ENCODE measurements at regions of chr12 and their contacts with region 1.

Region 1: GRCh38 chr12:6540181-6540877 is 6.0 kb downstream of the GAPDH start:
- DNase-seq: peak; percentile 69
- ATAC-seq: peak; percentile 38
- H3K4me3 Mint-ChIP-seq: peak overlapping the region; percentile 48
- H3K27ac Mint-ChIP-seq: peak overlapping the region; percentile 82
- H3K4me1 Mint-ChIP-seq: peaks cover 65% of the 10 kb centered on the region
- H3K27me3 Mint-ChIP-seq: no peaks in the 10 kb centered on the region

Region 2: GRCh38 chr12:6229224-6230218 is 310.8 kb before region 1 on chr12:
- CTCF ChIA-PET with region 1: no interaction called
- POLR2A ChIA-PET with region 1: no interaction called
- DNase-seq: no peak
- ATAC-seq: no peak
- H3K4me3 Mint-ChIP-seq: no peak overlapping the region
- H3K27ac Mint-ChIP-seq: peak overlapping the region; percentile 92
- H3K4me1 Mint-ChIP-seq: peaks cover 38% of the 10 kb centered on the region
- H3K27me3 Mint-ChIP-seq: no peaks in the 10 kb centered on the region

Region 3: GRCh38 chr12:6443361-6443983 is 96.9 kb before region 1 on chr12:
- CTCF ChIA-PET with region 1: interaction called, 15 read pairs
- POLR2A ChIA-PET with region 1: interaction called, 4 read pairs
- DNase-seq: peak; percentile 49
- ATAC-seq: peak; percentile 29
- H3K4me3 Mint-ChIP-seq: peak overlapping the region; percentile 90
- H3K27ac Mint-ChIP-seq: peak overlapping the region; percentile 96
- H3K4me1 Mint-ChIP-seq: peaks cover 68% of the 10 kb centered on the region
- H3K27me3 Mint-ChIP-seq: no peaks in the 10 kb centered on the region

Region 4: GRCh38 chr12:6493497-6494257 is 46.7 kb before region 1 on chr12 and contains the start of gene NCAPD2:
- CTCF ChIA-PET with region 1: interaction called, 20 read pairs
- POLR2A ChIA-PET with region 1: interaction called, 31 read pairs
- DNase-seq: peak; percentile 98
- ATAC-seq: peak; percentile 89
- H3K4me3 Mint-ChIP-seq: peak within 1 kb of the TSS; percentile 93
- H3K27ac Mint-ChIP-seq: peak within 1 kb of the TSS; percentile 99
- H3K4me1 Mint-ChIP-seq: peaks cover 33% of the 10 kb centered on the region
- H3K27me3 Mint-ChIP-seq: no peaks in the 10 kb centered on the region
- total RNA-seq, gene NCAPD2: 195 to 201 TPM

Region 5: DNA sequence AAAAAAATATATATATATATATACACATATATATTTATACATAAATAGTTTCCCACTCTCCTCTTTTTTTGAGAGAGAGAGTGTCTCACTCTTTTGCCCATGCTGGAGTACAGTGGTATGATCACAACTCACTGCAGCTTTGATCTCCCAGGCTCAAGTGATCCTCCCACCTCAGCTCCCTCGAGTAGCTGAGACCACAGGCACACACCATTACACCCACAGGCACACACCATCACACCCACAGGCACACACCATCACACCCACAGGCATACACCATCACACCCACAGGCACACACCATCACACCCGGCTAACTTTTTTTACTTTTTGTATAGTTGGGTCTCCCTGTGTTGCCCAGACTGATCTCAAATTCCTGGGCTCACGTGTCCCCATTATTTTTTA is 20.1 kb before region 1 on chr12:
- CTCF ChIA-PET with region 1: interaction called, 12 read pairs
- POLR2A ChIA-PET with region 1: interaction called, 4 read pairs
- DNase-seq: no peak
- ATAC-seq: no peak
- H3K4me3 Mint-ChIP-seq: no peak overlapping the region
- H3K27ac Mint-ChIP-seq: peak overlapping the region; percentile 73
- H3K4me1 Mint-ChIP-seq: peaks cover 3% of the 10 kb centered on the region
- H3K27me3 Mint-ChIP-seq: no peaks in the 10 kb centered on the region

Region 6: GRCh38 chr12:6563448-6564050 is 23.2 kb after region 1 on chr12:
- CTCF ChIA-PET with region 1: interaction called, 32 read pairs
- POLR2A ChIA-PET with region 1: interaction called, 3 read pairs
- DNase-seq: peak; percentile 79
- ATAC-seq: no peak
- H3K4me3 Mint-ChIP-seq: no peak overlapping the region
- H3K27ac Mint-ChIP-seq: peak overlapping the region; percentile 62
- H3K4me1 Mint-ChIP-seq: peaks cover 33% of the 10 kb centered on the region
- H3K27me3 Mint-ChIP-seq: no peaks in the 10 kb centered on the region

Region 7: DNA sequence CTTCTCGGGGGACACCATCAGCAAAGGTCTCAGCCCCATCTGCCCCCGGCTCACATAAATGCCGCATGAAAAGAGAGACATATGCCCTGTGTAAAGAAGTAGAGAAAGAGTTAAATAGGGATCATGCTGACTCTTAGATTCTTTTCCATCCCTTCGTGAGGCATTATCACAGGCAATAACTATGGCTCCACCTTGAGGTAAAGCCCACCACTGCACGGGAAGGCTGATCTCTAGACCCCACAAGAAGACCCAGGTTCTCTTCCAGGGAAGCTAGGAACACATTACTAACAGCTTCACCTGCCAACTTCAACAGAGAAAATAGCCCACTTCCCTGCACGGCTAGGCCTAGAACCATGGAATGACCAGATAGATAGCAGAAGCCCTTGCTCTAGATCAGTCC is 41.9 kb after region 1 on chr12:
- CTCF ChIA-PET with region 1: no interaction called
- POLR2A ChIA-PET with region 1: no interaction called
- DNase-seq: no peak
- ATAC-seq: no peak
- H3K4me3 Mint-ChIP-seq: no peak overlapping the region
- H3K27ac Mint-ChIP-seq: no peak overlapping the region
- H3K4me1 Mint-ChIP-seq: no peaks in the 10 kb centered on the region
- H3K27me3 Mint-ChIP-seq: no peaks in the 10 kb centered on the region

Region 8: GRCh38 chr12:6620137-6620884 is 80.0 kb after region 1 on chr12:
- CTCF ChIA-PET with region 1: no interaction called
- POLR2A ChIA-PET with region 1: no interaction called
- DNase-seq: peak; percentile 59
- ATAC-seq: peak; percentile 74
- H3K4me3 Mint-ChIP-seq: peak overlapping the region; percentile 64
- H3K27ac Mint-ChIP-seq: peak overlapping the region; percentile 64
- H3K4me1 Mint-ChIP-seq: peaks cover 27% of the 10 kb centered on the region
- H3K27me3 Mint-ChIP-seq: no peaks in the 10 kb centered on the region

Measured in activated CD8-positive, alpha-beta T cell treated with anti-CD3 and anti-CD28 coated beads, Interleukin-2, amount 10 ng/mL, durations not matched to agents 7 days and 5 days (primary cell).